Activated CD4-positive, alpha-beta memory T cell treated with anti-CD3 and anti-CD28 coated beads for 36 hours (primary cell): ENCODE measurements at regions of chr2 and their contacts with region 1.

Region 1: GRCh38 chr2:39492095-39492590 is 55.1 kb upstream of the MAP4K3 start:
- DNase-seq: peak; percentile 33
- H3K4me3 Mint-ChIP-seq: no peak overlapping the region
- H3K27ac Mint-ChIP-seq: no peak overlapping the region
- H3K4me1 Mint-ChIP-seq: peaks cover 41% of the 10 kb centered on the region
- H3K27me3 Mint-ChIP-seq: peaks cover 7% of the 10 kb centered on the region

Region 2: GRCh38 chr2:39216346-39217191 is 275.6 kb before region 1 on chr2:
- CTCF ChIA-PET with region 1: no interaction called
- POLR2A ChIA-PET with region 1: no interaction called
- intact Hi-C with region 1: loop called (anchors 1 kb)
- DNase-seq: peak; percentile 79
- H3K4me3 Mint-ChIP-seq: peak overlapping the region; percentile 38
- H3K27ac Mint-ChIP-seq: peak overlapping the region; percentile 85
- H3K4me1 Mint-ChIP-seq: peaks cover 56% of the 10 kb centered on the region
- H3K27me3 Mint-ChIP-seq: no peaks in the 10 kb centered on the region

Region 3: DNA sequence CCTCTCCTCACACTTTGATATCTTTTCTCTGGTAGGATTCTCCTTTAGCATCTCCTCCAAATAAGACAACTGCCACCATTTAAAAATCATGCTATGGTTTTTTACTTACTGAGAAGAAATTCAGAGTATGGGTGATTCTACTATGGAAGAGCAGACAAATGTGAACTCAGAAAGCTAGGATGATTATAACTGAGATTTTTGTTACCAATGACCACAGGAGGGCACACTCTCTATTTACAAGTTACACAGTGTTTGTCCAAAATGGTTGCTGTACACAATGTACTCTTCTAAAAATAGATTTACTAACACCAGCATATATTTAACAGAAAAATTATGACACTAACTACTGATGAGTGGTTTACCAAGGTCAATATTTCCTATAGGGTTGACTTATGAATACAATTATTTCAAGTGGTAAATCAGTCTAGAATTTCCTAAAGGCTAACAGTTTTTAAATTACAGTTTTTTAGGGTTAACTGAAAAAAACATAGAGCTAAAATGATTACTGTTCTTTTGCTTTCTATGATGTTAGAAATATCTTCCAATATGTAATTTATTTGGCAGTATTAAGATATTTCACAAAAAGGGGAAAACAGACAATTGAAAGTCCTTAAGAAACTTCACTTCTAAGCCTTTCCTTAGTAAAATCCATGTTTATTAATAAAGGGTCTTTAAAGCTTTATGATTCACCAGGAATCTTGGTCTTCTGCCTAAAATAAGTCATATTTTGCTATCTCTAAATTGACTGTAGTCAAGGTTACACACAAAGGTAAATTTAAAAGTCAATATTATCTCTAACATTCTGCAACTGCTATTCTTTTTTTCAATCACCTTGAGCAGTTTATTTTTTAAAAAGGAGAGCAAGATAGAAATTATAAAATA is 112.3 kb before region 1 on chr2:
- CTCF ChIA-PET with region 1: interaction called, 4 read pairs
- POLR2A ChIA-PET with region 1: no interaction called
- intact Hi-C with region 1: loop called (anchors 1 kb)
- DNase-seq: no peak
- H3K4me3 Mint-ChIP-seq: no peak overlapping the region
- H3K27ac Mint-ChIP-seq: no peak overlapping the region
- H3K4me1 Mint-ChIP-seq: peaks cover 19% of the 10 kb centered on the region
- H3K27me3 Mint-ChIP-seq: no peaks in the 10 kb centered on the region

Region 4: GRCh38 chr2:39436592-39437510 is 55.3 kb before region 1 on chr2 and contains the start of gene MAP4K3:
- CTCF ChIA-PET with region 1: interaction called, 3 read pairs
- POLR2A ChIA-PET with region 1: no interaction called
- intact Hi-C with region 1: loop called (anchors 1 kb)
- DNase-seq: peak; percentile 87
- H3K4me3 Mint-ChIP-seq: peak within 1 kb of the TSS; percentile 84
- H3K27ac Mint-ChIP-seq: peak within 1 kb of the TSS; percentile 82
- H3K4me1 Mint-ChIP-seq: peaks cover 65% of the 10 kb centered on the region
- H3K27me3 Mint-ChIP-seq: no peaks in the 10 kb centered on the region
- total RNA-seq, gene MAP4K3: 9.9 to 10.1 TPM

Region 5: DNA sequence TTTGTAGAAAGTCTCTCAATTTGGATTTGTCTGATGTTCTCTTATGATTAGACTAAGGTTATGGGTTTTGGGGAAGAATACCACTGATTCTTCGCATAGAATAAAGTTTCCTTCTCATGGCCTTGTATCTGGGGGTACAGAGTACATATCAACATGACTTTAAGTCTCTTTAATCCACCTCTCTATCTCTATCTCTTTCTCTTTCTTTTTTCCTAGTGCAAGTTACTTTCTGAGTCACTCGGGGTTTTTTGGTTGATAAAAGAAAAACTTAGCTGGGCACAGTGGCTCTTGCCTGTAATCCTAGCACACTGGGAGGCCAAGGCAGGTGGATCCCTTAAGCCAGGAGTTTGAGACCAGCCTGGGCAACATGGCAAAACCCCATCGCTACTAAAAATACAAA is 45.0 kb after region 1 on chr2:
- CTCF ChIA-PET with region 1: no interaction called
- POLR2A ChIA-PET with region 1: no interaction called
- intact Hi-C with region 1: loop called (anchors 1 kb)
- DNase-seq: no peak
- H3K4me3 Mint-ChIP-seq: no peak overlapping the region
- H3K27ac Mint-ChIP-seq: no peak overlapping the region
- H3K4me1 Mint-ChIP-seq: peaks cover 9% of the 10 kb centered on the region
- H3K27me3 Mint-ChIP-seq: peaks cover 9% of the 10 kb centered on the region

Region 6: GRCh38 chr2:40451918-40452605 is 959.9 kb after region 1 on chr2 and contains the start of gene SLC8A1:
- CTCF ChIA-PET with region 1: no interaction called
- POLR2A ChIA-PET with region 1: no interaction called
- intact Hi-C with region 1: loop called (anchors 5 kb)
- DNase-seq: no peak
- H3K4me3 Mint-ChIP-seq: peak within 1 kb of the TSS; percentile 55
- H3K27ac Mint-ChIP-seq: no peak within 1 kb of the TSS
- H3K4me1 Mint-ChIP-seq: peaks cover 8% of the 10 kb centered on the region
- H3K27me3 Mint-ChIP-seq: peaks cover 28% of the 10 kb centered on the region
- total RNA-seq, gene SLC8A1: 0.12 to 0.19 TPM